Activated CD4-positive, alpha-beta memory T cell treated with anti-CD3 and anti-CD28 coated beads for 36 hours (primary cell): ENCODE measurements at regions of chr11 and their contacts with region 1.

Region 1: GRCh38 chr11:108697872-108698473 is 33.1 kb downstream of the DDX10 start:
- DNase-seq: peak; percentile 58
- H3K4me3 Mint-ChIP-seq: no peak overlapping the region
- H3K27ac Mint-ChIP-seq: no peak overlapping the region
- H3K4me1 Mint-ChIP-seq: peaks cover 2% of the 10 kb centered on the region
- H3K27me3 Mint-ChIP-seq: no peaks in the 10 kb centered on the region

Region 2: GRCh38 chr11:108871152-108871551 is 173.2 kb after region 1 on chr11:
- CTCF ChIA-PET with region 1: interaction called, 18 read pairs
- POLR2A ChIA-PET with region 1: interaction called, 3 read pairs
- intact Hi-C with region 1: loop called (anchors 1 kb)
- DNase-seq: peak; percentile 53
- H3K4me3 Mint-ChIP-seq: no peak overlapping the region
- H3K27ac Mint-ChIP-seq: no peak overlapping the region
- H3K4me1 Mint-ChIP-seq: peaks cover 10% of the 10 kb centered on the region
- H3K27me3 Mint-ChIP-seq: no peaks in the 10 kb centered on the region

Region 3: GRCh38 chr11:108985945-108986279 is 287.9 kb after region 1 on chr11:
- CTCF ChIA-PET with region 1: no interaction called
- POLR2A ChIA-PET with region 1: no interaction called
- intact Hi-C with region 1: no loop called
- DNase-seq: no peak
- H3K4me3 Mint-ChIP-seq: no peak overlapping the region
- H3K27ac Mint-ChIP-seq: no peak overlapping the region
- H3K4me1 Mint-ChIP-seq: no peaks in the 10 kb centered on the region
- H3K27me3 Mint-ChIP-seq: peaks cover 2% of the 10 kb centered on the region

Region 4: GRCh38 chr11:109697140-109697843 is 999.3 kb after region 1 on chr11:
- CTCF ChIA-PET with region 1: no interaction called
- POLR2A ChIA-PET with region 1: no interaction called
- intact Hi-C with region 1: loop called (anchors 10 kb)
- DNase-seq: no peak
- H3K4me3 Mint-ChIP-seq: no peak overlapping the region
- H3K27ac Mint-ChIP-seq: no peak overlapping the region
- H3K4me1 Mint-ChIP-seq: no peaks in the 10 kb centered on the region
- H3K27me3 Mint-ChIP-seq: no peaks in the 10 kb centered on the region